Psoas muscle (tissue), 8 donors: ENCODE measurements at regions of chr2 and their contacts with region 1.

Region 1: GRCh38 chr2:102520028-102520427 is 47.0 kb downstream of the SLC9A4 start:
- DNase-seq: no peak
- ATAC-seq: peak; percentile 70 to 85 (median 78)
- H3K4me3 ChIP-seq: no peak overlapping the region
- H3K27ac ChIP-seq: no peak overlapping the region
- H3K4me1 ChIP-seq: no peaks in the 10 kb centered on the region
- H3K27me3 ChIP-seq: no peaks in the 10 kb centered on the region
- CTCF ChIP-seq: peak; percentile 63

Region 2: DNA sequence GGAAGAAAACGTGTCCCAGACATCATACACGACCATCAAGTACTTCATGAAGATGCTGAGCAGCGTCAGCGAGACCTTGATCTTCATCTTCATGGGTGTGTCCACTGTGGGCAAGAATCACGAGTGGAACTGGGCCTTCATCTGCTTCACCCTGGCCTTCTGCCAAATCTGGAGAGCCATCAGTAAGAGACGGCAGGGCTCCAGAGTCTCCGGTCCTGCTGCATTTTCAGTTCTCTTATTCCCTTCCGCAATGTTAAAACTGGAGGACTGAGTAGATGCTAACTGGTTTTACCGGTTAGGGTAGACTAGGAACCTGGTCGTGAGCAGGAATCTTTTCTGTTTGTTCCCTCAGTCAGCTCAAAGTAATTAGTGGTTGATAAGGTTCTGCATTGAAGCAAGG is 14.7 kb before region 1 on chr2:
- intact Hi-C with region 1: no loop called
- DNase-seq: no peak
- ATAC-seq: no peak
- H3K4me3 ChIP-seq: no peak overlapping the region
- H3K27ac ChIP-seq: no peak overlapping the region
- H3K4me1 ChIP-seq: no peaks in the 10 kb centered on the region
- H3K27me3 ChIP-seq: peaks cover 0 to 2% (median 0%) of the 10 kb centered on the region in 3 donors
- CTCF ChIP-seq: no peak

Region 3: GRCh38 chr2:102615622-102616436 is 95.8 kb after region 1 on chr2:
- intact Hi-C with region 1: loop called (anchors 2 to 5 kb)
- DNase-seq: peak; percentile 29 to 78
- ATAC-seq: peak; percentile 63 to 67 (median 65)
- H3K4me3 ChIP-seq: no peak overlapping the region
- H3K27ac ChIP-seq: no peak overlapping the region
- H3K4me1 ChIP-seq: no peaks in the 10 kb centered on the region
- H3K27me3 ChIP-seq: peaks cover 0 to 2% (median 0%) of the 10 kb centered on the region in 3 donors
- CTCF ChIP-seq: peak; percentile 94

Region 4: GRCh38 chr2:102686479-102687439 is 166.7 kb after region 1 on chr2:
- intact Hi-C with region 1: loop called in 1 of 2 experiments (anchors 10 kb)
- DNase-seq: no peak
- ATAC-seq: no peak
- H3K4me3 ChIP-seq: no peak overlapping the region
- H3K27ac ChIP-seq: no peak overlapping the region
- H3K4me1 ChIP-seq: no peaks in the 10 kb centered on the region
- H3K27me3 ChIP-seq: no peaks in the 10 kb centered on the region
- CTCF ChIP-seq: no peak

Region 5: GRCh38 chr2:102703748-102704147 is 183.7 kb after region 1 on chr2:
- intact Hi-C with region 1: loop called in 1 of 2 experiments (anchors 2 kb)
- DNase-seq: no peak
- ATAC-seq: peak; percentile 62 to 93 (median 76)
- H3K4me3 ChIP-seq: no peak overlapping the region
- H3K27ac ChIP-seq: no peak overlapping the region
- H3K4me1 ChIP-seq: no peaks in the 10 kb centered on the region
- H3K27me3 ChIP-seq: no peaks in the 10 kb centered on the region
- CTCF ChIP-seq: peak; percentile 52